ENCODE measurements at regions of chr6 and their contacts with region 1.

Region 1: GRCh38 chr6:7166410-7167305 is 58.9 kb downstream of the RREB1 start:
- DNase-seq: no peak
- H3K4me3 ChIP-seq: no peak overlapping the region
- H3K27ac ChIP-seq: peak overlapping the region in 3 of 4 donors; percentile 64 to 70 (median 65)
- H3K4me1 ChIP-seq: peaks cover 0 to 95% (median 81%) of the 10 kb centered on the region in 4 donors
- H3K27me3 ChIP-seq: no peaks in the 10 kb centered on the region
- CTCF ChIP-seq: no peak
- EP300 ChIP-seq: no peak
- POLR2A ChIP-seq: no peak

Region 2: DNA sequence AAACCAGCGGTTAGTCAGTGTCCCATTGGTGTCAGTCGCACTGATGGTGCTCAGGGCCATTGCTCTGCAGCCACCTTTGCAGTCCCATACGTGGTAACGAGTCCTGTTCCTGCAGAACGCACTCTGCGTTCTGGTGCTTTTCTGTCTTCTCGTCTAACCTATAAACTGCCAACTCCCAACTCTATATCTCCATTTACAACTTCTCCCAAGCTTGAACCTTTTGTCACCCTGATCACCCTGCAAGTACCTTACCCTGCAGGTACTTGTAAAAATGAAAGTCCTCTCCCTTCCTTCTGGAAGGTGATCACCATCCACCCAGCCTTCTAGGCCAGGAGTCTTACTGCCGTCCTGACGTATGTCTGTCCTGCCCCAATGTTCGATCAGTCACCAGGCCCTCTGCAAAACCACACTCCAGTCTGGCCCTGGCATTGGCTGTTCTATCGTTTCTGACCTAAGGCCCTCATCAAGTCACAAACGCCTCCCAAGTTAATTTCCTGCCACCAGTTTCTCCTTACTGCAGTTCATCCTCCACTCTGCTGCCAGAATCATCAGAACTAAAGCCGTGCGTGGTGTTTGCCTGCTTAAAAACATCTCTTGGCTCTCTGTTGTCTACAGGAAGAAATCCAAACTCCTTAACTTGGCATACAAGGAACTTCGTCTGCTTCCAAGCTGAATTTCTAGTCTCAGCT is 51.0 kb before region 1 on chr6:
- intact Hi-C with region 1: loop called (anchors 5 kb)
- DNase-seq: no peak
- H3K4me3 ChIP-seq: no peak overlapping the region
- H3K27ac ChIP-seq: peak overlapping the region; percentile 69 to 80 (median 72)
- H3K4me1 ChIP-seq: peaks cover 0 to 70% (median 52%) of the 10 kb centered on the region in 4 donors
- H3K27me3 ChIP-seq: no peaks in the 10 kb centered on the region
- CTCF ChIP-seq: no peak
- EP300 ChIP-seq: no peak
- POLR2A ChIP-seq: no peak